Activated T-helper 1 cell treated with anti-CD3 and anti-CD28 coated beads, Interleukin-12 subunit alpha, Interleukin-12 subunit beta, Interleukin-2, Interleukin-4 antibody, amounts not matched to agents 30 ng/mL and 10 ng/mL and 1 ng/mL, durations not matched to agents 14 hours and 24 hours and 36 hours (primary cell): ENCODE measurements at regions of chr16 and their contacts with region 1.

Region 1: DNA sequence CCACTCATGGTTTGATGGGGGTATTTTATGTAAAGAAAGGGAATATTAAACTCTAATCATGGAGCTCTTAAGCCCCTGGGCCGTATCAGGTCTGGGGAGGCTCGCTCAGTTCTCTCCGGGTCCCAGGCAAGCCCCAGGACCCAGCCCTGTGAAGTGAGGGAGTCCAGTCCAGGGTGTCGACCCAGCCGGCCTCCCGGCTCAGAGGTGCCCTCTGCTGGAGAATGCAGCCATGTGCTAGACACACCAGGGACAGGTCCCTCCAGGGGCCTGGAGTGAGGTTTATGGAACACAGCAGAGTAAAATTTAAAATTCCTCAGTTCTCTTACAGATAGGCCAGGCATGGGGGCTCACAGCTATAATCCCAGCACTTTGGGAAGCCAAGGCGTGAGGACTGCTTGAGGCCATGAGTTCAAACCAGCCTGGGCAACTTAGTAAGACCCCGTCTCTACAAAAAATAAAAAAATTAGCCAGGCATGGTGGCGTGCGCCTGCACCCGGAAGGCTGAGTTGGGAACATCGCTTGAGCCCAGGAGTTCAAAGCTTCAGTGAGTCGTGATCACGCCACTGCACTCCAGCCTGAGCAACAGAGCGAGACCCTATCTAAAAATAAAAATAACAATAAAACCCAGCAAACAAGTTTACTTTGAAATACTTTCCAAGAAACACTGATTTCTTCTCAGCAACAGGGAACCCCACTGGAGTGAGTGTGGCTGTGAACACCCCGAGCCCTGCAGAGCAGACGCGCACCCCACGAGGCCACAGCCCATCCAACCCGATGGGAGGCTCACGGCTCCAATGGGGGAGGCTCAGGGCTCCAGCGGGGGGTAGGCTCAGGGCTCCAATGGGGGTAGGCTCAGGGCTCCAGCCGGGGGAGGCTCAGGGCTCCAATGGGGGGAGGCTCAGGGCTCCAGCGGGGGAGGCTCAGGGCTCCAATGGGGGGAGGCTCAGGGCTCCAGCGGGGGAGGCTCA is 72.2 kb downstream of the ZNF778 start:
- DNase-seq: peak; percentile 49
- H3K4me3 Mint-ChIP-seq: no peak overlapping the region
- H3K27ac Mint-ChIP-seq: peak overlapping the region; percentile 35
- H3K4me1 Mint-ChIP-seq: no peaks in the 10 kb centered on the region
- H3K27me3 Mint-ChIP-seq: no peaks in the 10 kb centered on the region

Region 2: GRCh38 chr16:89241187-89242007 is 48.3 kb before region 1 on chr16:
- intact Hi-C with region 1: loop called (anchors 1 kb)
- DNase-seq: peak; percentile 72
- H3K4me3 Mint-ChIP-seq: peak overlapping the region; percentile 95
- H3K27ac Mint-ChIP-seq: peak overlapping the region; percentile 97
- H3K4me1 Mint-ChIP-seq: peaks cover 5% of the 10 kb centered on the region
- H3K27me3 Mint-ChIP-seq: peaks cover 2% of the 10 kb centered on the region